OCI-LY7 (cell line): ENCODE measurements at regions of chr16 and their contacts with region 1.

Region 1: GRCh38 chr16:57828272-57829161 is 26.2 kb upstream of the KIFC3 start:
- DNase-seq: no peak
- H3K4me3 ChIP-seq: no peak overlapping the region
- H3K27ac ChIP-seq: no peak overlapping the region
- H3K4me1 ChIP-seq: no peaks in the 10 kb centered on the region
- CTCF ChIP-seq: peak; percentile 34; the same call in 1 of the 2 replicates

Region 2: DNA sequence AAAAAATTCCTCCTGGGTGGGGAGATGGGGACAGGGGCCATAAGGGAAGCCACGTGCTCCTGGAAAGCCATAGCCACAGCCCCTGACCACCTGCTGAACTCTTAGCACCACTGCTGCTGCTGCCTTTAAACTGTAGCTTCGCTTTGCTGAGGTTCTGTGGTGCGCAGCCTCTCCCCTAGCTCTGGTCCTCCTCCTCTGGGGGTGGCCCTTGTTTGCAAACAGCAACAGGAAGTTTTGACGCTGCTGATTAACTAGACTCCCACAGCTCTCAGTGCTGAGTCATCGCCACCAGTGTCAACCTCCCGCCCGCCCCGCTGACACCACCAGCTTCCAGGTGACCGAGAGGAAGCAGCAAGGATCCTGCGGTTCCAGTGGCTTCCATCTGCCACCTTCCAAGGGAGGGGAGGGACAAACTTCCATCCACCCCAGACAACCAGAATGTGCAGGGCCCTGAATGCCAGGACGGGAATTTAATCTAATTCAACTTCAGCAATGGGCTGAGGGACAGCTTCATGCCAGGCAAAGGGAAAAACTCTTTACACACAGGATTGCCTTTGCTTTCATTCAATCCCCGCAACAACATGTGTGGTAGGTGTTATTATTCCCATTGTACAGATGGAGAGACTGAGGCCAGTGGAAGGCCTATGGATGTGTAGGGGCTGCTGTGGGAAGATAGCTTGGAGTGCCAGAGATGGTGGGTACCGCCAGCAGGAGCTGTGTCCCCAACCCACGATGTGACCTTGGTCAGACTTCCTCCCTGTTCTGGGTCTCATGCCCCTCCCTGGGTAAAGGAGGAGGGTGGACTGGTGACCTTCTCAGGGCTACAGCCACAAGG is 18.1 kb before region 1 on chr16:
- CTCF ChIA-PET with region 1: no interaction called
- POLR2A ChIA-PET with region 1: no interaction called
- intact Hi-C with region 1: no loop called
- DNase-seq: no peak
- H3K4me3 ChIP-seq: no peak overlapping the region
- H3K27ac ChIP-seq: no peak overlapping the region
- H3K4me1 ChIP-seq: no peaks in the 10 kb centered on the region
- CTCF ChIP-seq: no peak

Region 3: GRCh38 chr16:57844416-57845030 is 16.0 kb after region 1 on chr16:
- CTCF ChIA-PET with region 1: interaction called, 12 read pairs
- POLR2A ChIA-PET with region 1: no interaction called
- intact Hi-C with region 1: no loop called
- DNase-seq: no peak
- H3K4me3 ChIP-seq: no peak overlapping the region
- H3K27ac ChIP-seq: no peak overlapping the region
- H3K4me1 ChIP-seq: no peaks in the 10 kb centered on the region
- CTCF ChIP-seq: no peak

Region 4: GRCh38 chr16:57859331-57859730 is 30.8 kb after region 1 on chr16:
- CTCF ChIA-PET with region 1: no interaction called
- POLR2A ChIA-PET with region 1: no interaction called
- intact Hi-C with region 1: no loop called
- DNase-seq: peak; percentile 13
- H3K4me3 ChIP-seq: no peak overlapping the region
- H3K27ac ChIP-seq: no peak overlapping the region
- H3K4me1 ChIP-seq: no peaks in the 10 kb centered on the region
- CTCF ChIP-seq: peak; percentile 52; the same call in 1 of the 2 replicates